ENCODE measurements at regions of chr6 and their contacts with region 1.

Region 1: DNA sequence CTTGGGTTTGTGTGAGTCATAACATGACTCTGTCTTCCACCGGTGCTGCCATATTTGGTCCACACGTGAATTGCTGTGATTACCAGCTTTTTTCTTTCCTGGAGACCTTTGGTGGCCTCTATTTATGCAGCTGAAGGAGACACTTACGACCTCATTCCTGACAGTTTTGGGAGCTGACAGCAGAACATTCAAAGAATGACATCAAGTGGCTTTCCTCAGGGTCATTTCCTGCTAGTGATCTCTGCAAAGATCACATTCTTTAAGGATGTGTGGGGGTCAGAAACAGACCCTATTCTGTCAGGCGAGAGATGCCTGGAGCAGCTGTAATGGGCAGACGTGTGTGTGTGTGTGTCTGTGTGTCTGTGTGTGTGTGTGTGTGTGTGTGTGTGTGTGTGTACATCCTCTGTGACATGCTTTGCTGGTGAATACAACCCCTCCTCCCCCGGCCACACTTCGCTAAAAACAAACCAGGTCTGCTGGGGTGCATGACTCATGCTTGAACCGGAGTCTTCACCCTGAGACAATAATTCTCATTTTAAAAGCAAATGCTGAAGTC is 115.6 kb downstream of the TMEM170B start:
- DNase-seq: peak; percentile 71
- H3K4me3 Mint-ChIP-seq: no peak overlapping the region
- H3K27ac Mint-ChIP-seq: no peak overlapping the region
- H3K4me1 Mint-ChIP-seq: peaks cover 13% of the 10 kb centered on the region
- H3K27me3 Mint-ChIP-seq: peaks cover 9% of the 10 kb centered on the region

Region 2: DNA sequence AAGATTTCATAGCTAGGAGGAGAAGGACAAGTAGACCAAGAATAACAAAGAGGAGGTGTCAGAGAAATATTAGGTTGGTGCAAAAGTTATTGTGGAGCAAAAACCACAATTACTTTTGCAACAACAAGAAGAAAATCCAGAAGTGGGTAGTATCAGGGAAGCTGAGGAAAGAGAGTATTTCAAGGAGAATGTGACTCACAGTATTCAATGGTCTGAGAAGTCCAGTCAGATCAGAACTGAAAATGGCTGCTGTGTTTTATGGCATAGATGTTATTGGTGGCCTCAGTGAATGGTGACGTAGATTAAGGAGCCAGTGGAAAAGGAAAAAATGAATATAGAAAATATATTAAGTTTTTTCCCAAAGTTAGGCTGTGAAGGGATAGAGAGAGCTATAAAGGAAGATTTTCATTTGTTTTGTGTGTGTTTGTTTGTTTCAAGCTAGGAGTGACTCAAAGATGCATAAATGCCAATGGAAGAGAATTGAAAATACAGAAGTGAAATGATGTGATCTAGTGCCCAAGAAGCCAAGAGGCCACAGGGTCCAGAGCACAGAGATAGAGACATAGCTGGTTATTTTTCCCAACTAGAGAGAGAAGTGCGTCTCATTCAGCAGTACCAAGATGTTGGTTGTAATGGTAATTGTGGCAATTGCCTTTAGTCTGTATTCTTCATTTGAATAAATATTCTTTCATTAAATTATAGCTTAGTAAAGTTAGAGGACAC is 12.7 kb after region 1 on chr6:
- CTCF ChIA-PET with region 1: interaction called, 26 read pairs
- POLR2A ChIA-PET with region 1: no interaction called
- intact Hi-C with region 1: no loop called
- DNase-seq: no peak
- H3K4me3 Mint-ChIP-seq: no peak overlapping the region
- H3K27ac Mint-ChIP-seq: no peak overlapping the region
- H3K4me1 Mint-ChIP-seq: peaks cover 12% of the 10 kb centered on the region
- H3K27me3 Mint-ChIP-seq: peaks cover 21% of the 10 kb centered on the region

Region 3: GRCh38 chr6:11851390-11851789 is 198.3 kb after region 1 on chr6:
- CTCF ChIA-PET with region 1: no interaction called
- POLR2A ChIA-PET with region 1: no interaction called
- intact Hi-C with region 1: no loop called
- DNase-seq: no peak
- H3K4me3 Mint-ChIP-seq: no peak overlapping the region
- H3K27ac Mint-ChIP-seq: no peak overlapping the region
- H3K4me1 Mint-ChIP-seq: peaks cover 6% of the 10 kb centered on the region
- H3K27me3 Mint-ChIP-seq: no peaks in the 10 kb centered on the region

Region 4: DNA sequence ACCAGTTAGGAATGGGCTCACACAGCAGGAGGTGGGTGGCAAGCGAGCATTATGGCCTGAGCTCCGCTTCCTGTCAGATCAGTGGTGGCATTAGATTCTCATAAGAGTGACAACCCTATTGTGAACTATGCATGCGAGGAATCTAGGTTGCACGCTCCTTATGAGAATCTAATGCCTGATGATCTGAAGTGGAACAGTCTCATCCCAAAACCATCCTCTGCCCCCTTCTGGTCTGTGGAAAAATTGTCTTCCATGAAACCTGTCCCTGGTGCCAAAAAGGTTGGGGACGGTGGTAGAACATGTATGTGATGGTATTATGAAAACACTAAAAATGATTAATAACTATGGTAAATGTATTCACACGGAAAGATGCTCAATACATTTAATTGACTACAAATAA is 259.3 kb after region 1 on chr6:
- CTCF ChIA-PET with region 1: interaction called, 3 read pairs
- POLR2A ChIA-PET with region 1: no interaction called
- intact Hi-C with region 1: loop called (anchors 5 kb)
- DNase-seq: no peak
- H3K4me3 Mint-ChIP-seq: no peak overlapping the region
- H3K27ac Mint-ChIP-seq: no peak overlapping the region
- H3K4me1 Mint-ChIP-seq: no peaks in the 10 kb centered on the region
- H3K27me3 Mint-ChIP-seq: no peaks in the 10 kb centered on the region

Region 5: DNA sequence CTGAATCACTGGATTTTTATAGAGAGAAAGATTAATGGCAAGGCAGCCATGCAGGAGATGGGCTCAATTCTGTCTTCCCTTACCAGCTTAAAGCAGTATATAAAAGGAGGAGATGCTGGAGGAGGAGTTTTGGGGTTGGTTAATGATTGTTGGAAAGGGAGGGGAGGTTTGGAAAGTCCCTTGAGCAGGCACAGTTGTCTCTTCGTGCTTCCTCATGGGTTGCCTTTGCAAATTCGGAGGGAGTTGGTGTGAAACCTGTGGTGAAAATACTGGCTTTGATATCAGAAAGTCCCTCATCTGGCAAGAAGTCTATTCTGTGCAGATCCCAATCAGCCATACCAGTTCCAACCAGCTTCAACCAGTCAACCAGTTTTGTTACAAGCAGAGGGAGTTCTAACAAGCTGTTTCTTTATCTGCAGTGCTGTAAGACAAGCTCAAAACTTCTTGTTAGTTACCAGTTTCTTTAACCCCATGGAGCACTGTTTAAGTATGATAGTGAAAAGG is 466.0 kb after region 1 on chr6:
- CTCF ChIA-PET with region 1: no interaction called
- POLR2A ChIA-PET with region 1: no interaction called
- intact Hi-C with region 1: no loop called
- DNase-seq: peak; percentile 66
- H3K4me3 Mint-ChIP-seq: no peak overlapping the region
- H3K27ac Mint-ChIP-seq: peak overlapping the region; percentile 85
- H3K4me1 Mint-ChIP-seq: peaks cover 49% of the 10 kb centered on the region
- H3K27me3 Mint-ChIP-seq: no peaks in the 10 kb centered on the region

Region 6: DNA sequence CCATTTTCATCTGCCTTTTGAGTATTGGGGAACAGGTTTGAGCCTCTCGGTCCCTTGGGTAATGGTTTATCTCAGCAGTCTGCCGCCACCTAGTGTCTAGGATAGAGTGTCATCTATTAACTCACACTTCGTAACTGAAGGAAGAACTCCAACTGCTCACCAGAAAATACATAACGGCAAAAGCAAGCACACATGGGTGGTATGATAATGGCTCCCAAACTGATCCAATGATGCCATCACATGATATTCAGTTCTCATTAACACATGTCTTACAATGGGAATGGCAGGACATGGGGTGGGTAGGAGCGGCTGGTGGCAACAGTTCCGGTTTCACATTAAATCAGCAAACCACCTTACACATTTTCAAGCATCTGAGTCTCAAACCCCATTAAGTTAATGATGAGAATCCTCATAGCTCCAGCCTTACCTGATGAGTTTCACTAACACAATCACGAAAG is 952.8 kb after region 1 on chr6:
- CTCF ChIA-PET with region 1: interaction called, 11 read pairs
- POLR2A ChIA-PET with region 1: no interaction called
- intact Hi-C with region 1: loop called (anchors 2 kb)
- DNase-seq: peak; percentile 47
- H3K4me3 Mint-ChIP-seq: no peak overlapping the region
- H3K27ac Mint-ChIP-seq: no peak overlapping the region
- H3K4me1 Mint-ChIP-seq: no peaks in the 10 kb centered on the region
- H3K27me3 Mint-ChIP-seq: peaks cover 16% of the 10 kb centered on the region